H1 (cell line): ENCODE measurements at regions of chr15 and their contacts with region 1.

Region 1: GRCh38 chr15:78638658-78639314 is 2.2 kb downstream of the CHRNB4 start:
- DNase-seq: peak; percentile 34 to 92
- H3K4me3 ChIP-seq: no peak overlapping the region
- H3K27ac ChIP-seq: no peak overlapping the region
- H3K4me1 ChIP-seq: peaks cover 2 to 16% (median 7%) of the 10 kb centered on the region in 4 experiments; a peak in 6 of 7 replicates
- H3K27me3 ChIP-seq: peaks cover 0 to 6% (median 4%) of the 10 kb centered on the region in 4 experiments; a peak in 2 of 7 replicates
- CTCF ChIP-seq: peak; percentile 72 to 90 (median 77)
- EP300 ChIP-seq: no peak
- POLR2A ChIP-seq: no peak
- RAD21 ChIP-seq: peak; percentile 92

Region 2: GRCh38 chr15:78625606-78626280 is 13.0 kb before region 1 on chr15:
- CTCF ChIA-PET with region 1: interaction called, 49 read pairs
- POLR2A ChIA-PET with region 1: no interaction called
- DNase-seq: no peak
- H3K4me3 ChIP-seq: no peak overlapping the region
- H3K27ac ChIP-seq: no peak overlapping the region
- H3K4me1 ChIP-seq: peaks cover 0 to 3% (median 0%) of the 10 kb centered on the region in 4 experiments; a peak in 1 of 7 replicates
- H3K27me3 ChIP-seq: peaks cover 4 to 17% (median 15%) of the 10 kb centered on the region in 4 experiments
- CTCF ChIP-seq: no peak
- EP300 ChIP-seq: no peak
- POLR2A ChIP-seq: no peak
- RAD21 ChIP-seq: no peak

Region 3: DNA sequence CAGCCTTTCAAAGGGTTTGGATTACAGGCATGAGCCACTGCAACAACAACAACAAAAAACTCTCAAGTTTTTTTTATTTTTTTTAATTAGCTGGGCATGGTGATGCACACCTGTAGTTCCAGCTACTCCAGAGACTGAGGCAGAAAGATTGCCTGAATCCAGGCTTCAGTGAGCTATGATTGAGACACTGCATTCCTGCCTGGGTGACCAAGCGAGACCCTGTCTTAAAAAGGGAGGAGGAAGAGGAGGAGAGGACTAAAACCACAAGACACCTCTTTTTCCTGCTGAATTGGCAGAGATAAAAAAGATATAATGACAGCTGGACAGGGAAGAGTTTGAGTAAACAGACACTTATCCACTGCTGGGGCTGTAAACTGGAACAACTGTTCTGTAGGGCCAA is 24.9 kb after region 1 on chr15:
- CTCF ChIA-PET with region 1: interaction called, 13 read pairs
- POLR2A ChIA-PET with region 1: no interaction called
- DNase-seq: no peak
- H3K4me3 ChIP-seq: no peak overlapping the region
- H3K27ac ChIP-seq: no peak overlapping the region
- H3K4me1 ChIP-seq: no peaks in the 10 kb centered on the region
- H3K27me3 ChIP-seq: no peaks in the 10 kb centered on the region; a peak in 1 of 7 replicates
- CTCF ChIP-seq: no peak
- EP300 ChIP-seq: no peak
- POLR2A ChIP-seq: no peak
- RAD21 ChIP-seq: no peak

Region 4: DNA sequence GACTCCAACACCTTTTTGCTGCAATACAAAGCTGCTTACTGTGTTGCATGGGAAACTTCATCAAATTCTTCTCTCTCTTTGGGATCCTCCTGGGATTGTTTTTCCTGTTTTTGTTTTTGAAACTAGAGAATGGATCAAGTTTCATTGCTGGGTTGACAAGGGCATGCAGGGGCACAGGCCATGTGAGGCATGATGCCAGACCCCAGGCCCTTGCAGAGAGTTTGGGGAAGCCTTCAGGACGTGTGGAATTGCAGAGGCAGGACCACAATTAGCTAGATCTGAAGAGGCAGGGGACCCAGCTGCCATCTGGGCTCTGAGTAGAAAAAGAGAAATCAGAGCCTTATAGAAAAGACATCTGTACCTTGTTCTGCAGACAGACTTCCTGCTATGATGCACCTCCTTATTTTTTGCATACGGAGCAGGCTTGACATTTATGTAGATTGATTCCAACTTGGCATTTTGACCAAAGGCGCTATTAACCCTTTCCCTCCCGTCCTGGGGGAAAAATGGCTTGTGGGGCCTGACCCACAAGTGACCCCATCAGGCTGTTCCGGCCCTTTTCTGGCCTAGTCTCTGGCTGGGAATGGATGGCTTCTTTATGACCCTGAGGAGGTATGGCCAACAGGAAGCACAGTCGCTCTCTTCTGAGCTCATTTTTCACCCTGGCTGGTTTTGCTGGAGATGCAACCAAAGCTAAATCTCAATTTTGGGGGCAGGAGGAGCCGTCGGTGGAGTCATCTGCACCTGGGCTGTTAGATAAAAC is 46.6 kb after region 1 on chr15:
- CTCF ChIA-PET with region 1: interaction called, 57 read pairs
- POLR2A ChIA-PET with region 1: no interaction called
- DNase-seq: peak in 1 of 2 experiments; percentile 50
- H3K4me3 ChIP-seq: no peak overlapping the region
- H3K27ac ChIP-seq: no peak overlapping the region
- H3K4me1 ChIP-seq: peaks cover 9 to 18% (median 16%) of the 10 kb centered on the region in 4 experiments
- H3K27me3 ChIP-seq: no peaks in the 10 kb centered on the region
- CTCF ChIP-seq: no peak
- EP300 ChIP-seq: no peak
- POLR2A ChIP-seq: no peak
- RAD21 ChIP-seq: no peak

Region 5: DNA sequence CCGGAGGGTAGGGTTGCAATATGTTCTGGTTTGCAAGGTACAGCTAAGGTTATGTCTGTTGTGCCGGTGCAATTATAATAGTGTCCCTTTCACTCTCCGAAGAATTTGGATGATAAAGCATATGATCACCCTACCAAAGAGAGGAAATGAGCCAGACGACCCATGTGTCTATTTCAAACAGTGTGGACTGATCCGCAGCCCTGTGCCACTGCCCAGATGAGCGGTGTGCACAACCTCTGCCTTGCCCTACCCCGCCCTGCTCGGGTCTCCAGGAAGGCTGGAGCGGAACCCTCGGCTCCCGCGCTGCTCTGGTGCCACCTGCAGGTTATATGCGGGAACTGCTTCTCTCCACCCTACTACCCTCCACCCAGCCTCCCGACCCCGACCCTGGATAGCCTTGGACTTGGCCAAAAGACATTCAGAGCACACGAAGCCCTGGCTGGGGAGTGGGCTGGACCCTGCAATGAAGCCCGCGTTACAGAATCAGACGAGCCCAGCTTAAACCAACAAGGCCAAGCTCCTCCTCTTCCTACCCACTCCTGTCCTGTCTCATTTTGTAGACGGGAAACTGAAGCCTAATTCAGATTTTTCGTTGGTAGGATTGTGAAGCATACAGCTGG is 70.6 kb after region 1 on chr15:
- CTCF ChIA-PET with region 1: interaction called, 256 read pairs
- POLR2A ChIA-PET with region 1: no interaction called
- DNase-seq: peak in 1 of 2 experiments; percentile 94
- H3K4me3 ChIP-seq: no peak overlapping the region
- H3K27ac ChIP-seq: no peak overlapping the region
- H3K4me1 ChIP-seq: peaks cover 0 to 5% (median 0%) of the 10 kb centered on the region in 4 experiments; a peak in 2 of 7 replicates
- H3K27me3 ChIP-seq: peaks cover 0 to 3% (median 1%) of the 10 kb centered on the region in 4 experiments; a peak in 2 of 7 replicates
- CTCF ChIP-seq: peak; percentile 86 to 96 (median 88)
- EP300 ChIP-seq: no peak
- POLR2A ChIP-seq: no peak
- RAD21 ChIP-seq: peak; percentile 97 to 99

Region 6: DNA sequence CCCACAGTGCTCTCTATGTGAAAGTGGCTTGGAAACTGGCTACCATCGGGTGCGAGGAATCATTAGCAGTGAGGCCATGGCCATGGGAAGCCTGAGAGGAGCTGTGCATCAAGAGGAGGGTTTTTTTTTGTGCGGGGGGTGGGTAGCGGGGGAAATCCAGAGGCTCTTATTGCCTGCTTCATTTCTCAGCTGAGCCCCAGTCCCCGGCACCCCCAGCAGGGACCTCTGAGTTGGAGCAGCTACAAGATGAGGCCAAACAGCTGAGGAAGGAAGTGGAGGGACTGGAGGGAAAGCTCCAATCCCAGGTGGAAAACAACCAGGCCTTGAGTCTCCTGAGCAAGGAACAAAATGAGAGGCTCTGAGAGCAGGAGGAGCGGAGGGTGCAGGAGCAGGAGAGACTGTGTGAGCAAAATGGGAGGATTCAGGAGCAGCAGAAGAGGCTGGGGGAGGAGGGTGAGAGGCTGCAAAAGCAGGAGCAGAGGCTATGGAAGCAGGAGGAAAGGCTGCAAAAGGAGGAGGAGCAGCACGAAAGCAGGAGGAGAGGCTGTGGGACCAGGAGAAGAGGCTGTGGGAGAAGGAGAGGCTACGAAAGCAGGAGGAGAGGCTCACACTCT is 95.8 kb after region 1 on chr15:
- CTCF ChIA-PET with region 1: interaction called, 68 read pairs
- POLR2A ChIA-PET with region 1: no interaction called
- DNase-seq: no peak
- H3K4me3 ChIP-seq: no peak overlapping the region
- H3K27ac ChIP-seq: no peak overlapping the region
- H3K4me1 ChIP-seq: no peaks in the 10 kb centered on the region; a peak in 1 of 7 replicates
- H3K27me3 ChIP-seq: no peaks in the 10 kb centered on the region; a peak in 1 of 7 replicates
- CTCF ChIP-seq: no peak
- EP300 ChIP-seq: no peak
- POLR2A ChIP-seq: no peak
- RAD21 ChIP-seq: no peak

Region 7: DNA sequence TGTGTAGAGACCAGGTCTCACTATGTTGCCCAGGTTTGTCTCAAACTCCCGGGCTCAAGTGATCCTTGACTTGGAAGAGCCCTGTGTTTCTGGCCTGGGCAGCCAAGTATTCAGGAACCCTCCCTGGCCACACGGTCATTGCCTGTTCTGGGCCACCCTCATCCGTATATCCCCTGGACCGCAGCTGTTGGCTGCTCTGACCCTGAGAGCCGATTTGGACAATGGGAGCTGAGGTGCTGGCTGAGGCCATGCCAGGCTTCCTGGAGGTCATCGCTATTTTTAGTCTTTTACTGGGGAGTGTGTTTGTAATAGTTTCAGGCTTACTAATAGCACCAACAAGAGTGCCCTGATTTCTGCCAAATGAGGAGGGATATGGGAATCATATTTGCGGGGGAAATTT is 111.8 kb after region 1 on chr15:
- CTCF ChIA-PET with region 1: interaction called, 29 read pairs
- POLR2A ChIA-PET with region 1: no interaction called
- DNase-seq: no peak
- H3K4me3 ChIP-seq: 0 out of 8 replicates have a peak overlapping the region, but pooled peaks of 1 of the 4 experiments have one; percentile 32
- H3K27ac ChIP-seq: no peak overlapping the region
- H3K4me1 ChIP-seq: no peaks in the 10 kb centered on the region
- H3K27me3 ChIP-seq: no peaks in the 10 kb centered on the region
- CTCF ChIP-seq: no peak
- EP300 ChIP-seq: no peak
- POLR2A ChIP-seq: no peak
- RAD21 ChIP-seq: no peak